Activated CD4-positive, alpha-beta memory T cell treated with anti-CD3 and anti-CD28 coated beads for 36 hours (primary cell): ENCODE measurements at regions of chr7 and their contacts with region 1.

Region 1: GRCh38 chr7:27662490-27663205 is at the start of gene HIBADH:
- DNase-seq: peak; percentile 96
- H3K4me3 Mint-ChIP-seq: peak within 1 kb of the TSS; percentile 76
- H3K27ac Mint-ChIP-seq: peak within 1 kb of the TSS; percentile 76
- H3K4me1 Mint-ChIP-seq: peaks cover 14% of the 10 kb centered on the region
- H3K27me3 Mint-ChIP-seq: no peaks in the 10 kb centered on the region
- total RNA-seq, gene HIBADH: 21.9 to 22.6 TPM

Region 2: GRCh38 chr7:27520815-27521790 is 141.5 kb before region 1 on chr7:
- CTCF ChIA-PET with region 1: no interaction called
- POLR2A ChIA-PET with region 1: no interaction called
- intact Hi-C with region 1: no loop called
- DNase-seq: no peak
- H3K4me3 Mint-ChIP-seq: no peak overlapping the region
- H3K27ac Mint-ChIP-seq: no peak overlapping the region
- H3K4me1 Mint-ChIP-seq: no peaks in the 10 kb centered on the region
- H3K27me3 Mint-ChIP-seq: no peaks in the 10 kb centered on the region

Region 3: DNA sequence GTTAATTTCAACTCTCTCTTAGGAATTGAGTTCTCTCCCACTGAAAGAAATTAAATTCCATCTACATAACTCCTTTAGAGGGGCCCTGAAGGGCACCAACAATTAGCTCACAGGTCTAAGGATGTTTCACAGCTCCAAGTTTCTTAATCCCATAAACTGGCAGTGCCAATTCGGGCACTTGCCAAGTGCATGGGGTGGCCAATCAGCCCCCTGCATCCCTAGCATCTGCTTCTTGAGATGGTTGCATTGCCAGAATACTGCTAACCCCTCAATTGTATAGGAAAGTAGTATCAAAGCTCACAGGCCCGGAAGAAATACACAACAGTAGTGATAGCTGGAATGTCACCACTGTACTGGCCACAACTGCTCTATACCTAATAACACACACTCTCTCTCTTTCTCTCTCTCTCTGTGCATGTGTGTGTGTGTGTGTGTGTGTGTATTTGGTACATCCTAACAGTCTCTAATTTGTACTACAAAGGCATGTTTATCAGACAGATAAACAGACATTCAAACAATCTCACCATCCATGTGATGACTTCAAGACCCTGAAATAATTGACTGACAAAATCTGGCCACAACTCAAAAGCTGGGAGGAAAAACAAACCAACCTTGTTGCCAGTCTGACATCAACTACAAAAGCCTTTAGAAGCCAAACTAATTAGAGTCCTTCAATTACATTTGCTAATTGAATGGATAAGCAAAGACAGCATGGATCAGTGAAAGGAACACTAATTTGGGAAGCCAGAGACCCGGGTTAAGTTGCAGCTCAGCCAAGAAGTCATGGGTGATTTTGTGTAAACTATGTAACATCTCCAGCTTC is 27.8 kb before region 1 on chr7:
- CTCF ChIA-PET with region 1: no interaction called
- POLR2A ChIA-PET with region 1: no interaction called
- intact Hi-C with region 1: no loop called
- DNase-seq: no peak
- H3K4me3 Mint-ChIP-seq: no peak overlapping the region
- H3K27ac Mint-ChIP-seq: no peak overlapping the region
- H3K4me1 Mint-ChIP-seq: peaks cover 20% of the 10 kb centered on the region
- H3K27me3 Mint-ChIP-seq: no peaks in the 10 kb centered on the region

Region 4: DNA sequence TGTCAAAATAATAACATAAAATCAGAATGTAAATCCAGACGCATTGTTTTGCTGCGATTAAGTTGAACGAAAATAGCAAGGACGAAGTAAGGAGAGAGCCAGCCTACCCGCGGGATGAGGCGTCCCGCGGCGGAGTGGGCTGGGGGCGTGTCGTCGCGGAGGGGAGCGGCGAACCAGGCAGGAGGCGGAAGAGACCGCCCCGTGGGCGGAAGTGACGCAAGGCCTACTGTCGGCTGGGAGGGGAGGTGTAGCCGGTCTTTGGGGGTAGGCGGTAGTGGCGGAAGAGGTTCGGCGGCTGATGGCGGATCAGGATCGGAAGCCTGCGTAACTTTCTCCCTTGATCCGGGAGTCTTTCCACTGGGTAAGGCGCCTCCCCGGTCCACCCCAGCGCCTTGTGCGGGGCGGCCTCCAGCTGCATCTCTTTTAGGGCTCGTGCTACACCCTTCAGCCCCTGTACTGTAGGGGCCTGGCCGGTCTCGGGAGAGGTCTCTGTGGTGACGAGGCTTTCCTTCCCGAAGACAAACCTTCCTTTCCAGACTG is 77.3 kb after region 1 on chr7 and contains the start of gene TAX1BP1:
- CTCF ChIA-PET with region 1: interaction called, 5 read pairs
- POLR2A ChIA-PET with region 1: interaction called, 29 read pairs
- intact Hi-C with region 1: loop called (anchors 1 kb)
- DNase-seq: peak; percentile 97
- H3K4me3 Mint-ChIP-seq: peak within 1 kb of the TSS; percentile 87
- H3K27ac Mint-ChIP-seq: peak within 1 kb of the TSS; percentile 99
- H3K4me1 Mint-ChIP-seq: peaks cover 39% of the 10 kb centered on the region
- H3K27me3 Mint-ChIP-seq: no peaks in the 10 kb centered on the region
- total RNA-seq, gene TAX1BP1: 104 to 105 TPM